GM12878 (cell line): ENCODE measurements at regions of chr17 and their contacts with region 1.

Region 1: DNA sequence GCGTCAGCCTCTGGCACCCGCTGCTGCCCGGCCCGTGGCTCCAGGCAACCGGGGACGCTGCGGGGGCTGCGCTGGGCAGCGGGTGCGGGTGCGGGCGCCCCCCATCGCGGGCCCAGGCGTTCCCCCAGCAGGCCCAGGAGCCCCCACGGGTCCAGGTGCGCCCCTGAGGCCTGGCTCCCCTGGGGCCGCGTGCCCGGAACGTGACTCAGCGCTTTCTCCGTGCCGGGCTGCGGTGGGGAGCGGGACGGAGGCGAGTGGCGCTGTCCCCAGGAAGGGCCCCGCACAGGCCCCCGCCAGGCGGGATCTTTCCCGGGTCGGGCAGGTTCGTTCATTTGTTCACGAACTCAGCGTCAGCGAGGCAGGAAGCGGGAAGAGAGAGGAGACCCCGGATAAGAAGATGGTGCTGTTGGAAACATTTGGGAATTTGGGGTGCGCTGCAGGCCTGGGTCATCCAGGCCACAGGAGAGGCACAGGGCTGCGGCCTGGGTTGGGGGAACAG is 18.4 kb upstream of the EXOC7 start:
- DNase-seq: no peak
- ATAC-seq: peak; percentile 9
- H3K4me3 ChIP-seq: peak overlapping the region; percentile 25; the same call in 1 of the 2 replicates
- H3K27ac ChIP-seq: no peak overlapping the region
- H3K4me1 ChIP-seq: peaks cover 6% of the 10 kb centered on the region
- H3K27me3 ChIP-seq: no peaks in the 10 kb centered on the region
- CTCF ChIP-seq: no peak
- EP300 ChIP-seq: no peak
- POLR2A ChIP-seq: no peak
- RAD21 ChIP-seq: no peak

Region 2: GRCh38 chr17:76072148-76072858 is 49.7 kb before region 1 on chr17 and contains the start of gene SRP68:
- CTCF ChIA-PET with region 1: no interaction called
- POLR2A ChIA-PET with region 1: no interaction called
- RAD21 ChIA-PET with region 1: no interaction called
- SMC1A ChIA-PET with region 1: no interaction called
- in situ Hi-C with region 1: no loop called
- intact Hi-C with region 1: no loop called
- DNase-seq: peak; percentile 59
- ATAC-seq: peak; percentile 99
- H3K4me3 ChIP-seq: peak within 1 kb of the TSS; percentile 76
- H3K27ac ChIP-seq: peak within 1 kb of the TSS; percentile 81
- H3K4me1 ChIP-seq: peaks cover 3% of the 10 kb centered on the region; the same call in 1 of the 2 replicates
- H3K27me3 ChIP-seq: peaks cover 4 to 24% of the 10 kb centered on the region in 2 experiments; a peak in 3 of 4 replicates
- CTCF ChIP-seq: no peak
- EP300 ChIP-seq: no peak
- POLR2A ChIP-seq: peak; percentile 92
- RAD21 ChIP-seq: no peak
- polyA plus RNA-seq, gene SRP68: 29.5 to 41.9 TPM

Region 3: DNA sequence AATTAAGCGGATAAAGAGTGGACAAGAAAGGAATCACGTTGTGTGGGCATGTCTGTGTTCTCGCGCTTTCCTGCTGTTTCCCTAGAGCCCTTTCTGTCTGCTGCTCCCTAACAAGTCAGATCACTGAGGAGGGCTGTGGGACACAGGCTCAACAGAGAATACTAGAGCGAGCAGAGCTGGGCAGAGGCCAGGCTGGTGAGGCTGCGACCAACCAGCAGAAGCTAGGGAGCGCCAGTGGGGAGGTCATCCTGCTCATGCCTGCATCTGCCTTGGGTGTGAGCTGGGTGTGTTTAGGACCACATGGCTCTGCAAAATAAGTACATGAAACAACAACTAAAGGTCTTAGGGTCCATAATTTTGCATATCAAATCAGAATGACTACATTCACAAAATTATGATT is 30.6 kb after region 1 on chr17:
- CTCF ChIA-PET with region 1: interaction called, 10 read pairs
- POLR2A ChIA-PET with region 1: no interaction called
- RAD21 ChIA-PET with region 1: interaction called, 3 read pairs
- SMC1A ChIA-PET with region 1: interaction called, 4 read pairs
- in situ Hi-C with region 1: no loop called
- intact Hi-C with region 1: no loop called
- DNase-seq: no peak
- ATAC-seq: no peak
- H3K4me3 ChIP-seq: no peak overlapping the region
- H3K27ac ChIP-seq: no peak overlapping the region
- H3K4me1 ChIP-seq: no peaks in the 10 kb centered on the region
- H3K27me3 ChIP-seq: no peaks in the 10 kb centered on the region
- CTCF ChIP-seq: no peak
- EP300 ChIP-seq: no peak
- POLR2A ChIP-seq: no peak
- RAD21 ChIP-seq: no peak

Region 4: GRCh38 chr17:76271669-76272540 is 149.9 kb after region 1 on chr17:
- CTCF ChIA-PET with region 1: interaction called, 316 read pairs
- POLR2A ChIA-PET with region 1: interaction called, 6 read pairs
- RAD21 ChIA-PET with region 1: interaction called, 75 read pairs
- SMC1A ChIA-PET with region 1: interaction called, 63 read pairs
- in situ Hi-C with region 1: no loop called
- intact Hi-C with region 1: no loop called
- DNase-seq: peak; percentile 91
- ATAC-seq: peak; percentile 66
- H3K4me3 ChIP-seq: peak overlapping the region; percentile 85
- H3K27ac ChIP-seq: peak overlapping the region; percentile 99
- H3K4me1 ChIP-seq: peaks cover 48% of the 10 kb centered on the region
- H3K27me3 ChIP-seq: no peaks in the 10 kb centered on the region
- CTCF ChIP-seq: peak in 1 of 3 experiments; percentile 12; a peak in 1 of 6 replicates
- EP300 ChIP-seq: peak; percentile 73 to 76; a peak in 3 of 4 replicates
- POLR2A ChIP-seq: peak; percentile 91
- RAD21 ChIP-seq: 0 out of 2 replicates have a peak, but pooled peaks have one; percentile 14

Region 5: GRCh38 chr17:76296186-76296585 is 174.2 kb after region 1 on chr17:
- CTCF ChIA-PET with region 1: interaction called, 32 read pairs
- POLR2A ChIA-PET with region 1: interaction called, 3 read pairs
- RAD21 ChIA-PET with region 1: interaction called, 5 read pairs
- SMC1A ChIA-PET with region 1: interaction called, 9 read pairs
- in situ Hi-C with region 1: no loop called
- intact Hi-C with region 1: no loop called
- DNase-seq: no peak
- ATAC-seq: no peak
- H3K4me3 ChIP-seq: no peak overlapping the region
- H3K27ac ChIP-seq: no peak overlapping the region
- H3K4me1 ChIP-seq: no peaks in the 10 kb centered on the region
- H3K27me3 ChIP-seq: no peaks in the 10 kb centered on the region
- CTCF ChIP-seq: no peak
- EP300 ChIP-seq: no peak
- POLR2A ChIP-seq: no peak
- RAD21 ChIP-seq: no peak

Region 6: GRCh38 chr17:76384222-76384986 is 262.4 kb after region 1 on chr17 and contains the start of gene SPHK1:
- CTCF ChIA-PET with region 1: no interaction called
- POLR2A ChIA-PET with region 1: no interaction called
- RAD21 ChIA-PET with region 1: no interaction called
- SMC1A ChIA-PET with region 1: no interaction called
- in situ Hi-C with region 1: no loop called
- intact Hi-C with region 1: loop called (anchors 10 kb)
- DNase-seq: no peak
- ATAC-seq: peak; percentile 88
- H3K4me3 ChIP-seq: peak within 1 kb of the TSS; percentile 75
- H3K27ac ChIP-seq: no peak within 1 kb of the TSS
- H3K4me1 ChIP-seq: peaks cover 24% of the 10 kb centered on the region
- H3K27me3 ChIP-seq: peaks cover 2 to 6% of the 10 kb centered on the region in 2 experiments; a peak in 2 of 4 replicates
- CTCF ChIP-seq: no peak
- EP300 ChIP-seq: no peak
- POLR2A ChIP-seq: no peak
- RAD21 ChIP-seq: no peak
- polyA plus RNA-seq, gene SPHK1: not detected